Right cardiac atrium (tissue), 5 donors: ENCODE measurements at regions of chr1 and their contacts with region 1.

Region 1: GRCh38 chr1:235093696-235094592 is 34.7 kb downstream of the TOMM20 start:
- DNase-seq: peak; percentile 74 to 93 (median 89)
- ATAC-seq: peak; percentile 76 to 81
- H3K4me3 ChIP-seq: no peak overlapping the region
- H3K27ac ChIP-seq: no peak overlapping the region
- H3K4me1 ChIP-seq: no peaks in the 10 kb centered on the region
- H3K27me3 ChIP-seq: no peaks in the 10 kb centered on the region

Region 2: GRCh38 chr1:234599617-234600417 is 494.1 kb before region 1 on chr1:
- intact Hi-C with region 1: loop called in 1 of 4 experiments (anchors 10 kb)
- DNase-seq: peak; percentile 91 to 96 (median 96)
- ATAC-seq: peak; percentile 93 to 94
- H3K4me3 ChIP-seq: peak overlapping the region; percentile 44
- H3K27ac ChIP-seq: peak overlapping the region; percentile 97
- H3K4me1 ChIP-seq: no peaks in the 10 kb centered on the region
- H3K27me3 ChIP-seq: no peaks in the 10 kb centered on the region

Region 3: DNA sequence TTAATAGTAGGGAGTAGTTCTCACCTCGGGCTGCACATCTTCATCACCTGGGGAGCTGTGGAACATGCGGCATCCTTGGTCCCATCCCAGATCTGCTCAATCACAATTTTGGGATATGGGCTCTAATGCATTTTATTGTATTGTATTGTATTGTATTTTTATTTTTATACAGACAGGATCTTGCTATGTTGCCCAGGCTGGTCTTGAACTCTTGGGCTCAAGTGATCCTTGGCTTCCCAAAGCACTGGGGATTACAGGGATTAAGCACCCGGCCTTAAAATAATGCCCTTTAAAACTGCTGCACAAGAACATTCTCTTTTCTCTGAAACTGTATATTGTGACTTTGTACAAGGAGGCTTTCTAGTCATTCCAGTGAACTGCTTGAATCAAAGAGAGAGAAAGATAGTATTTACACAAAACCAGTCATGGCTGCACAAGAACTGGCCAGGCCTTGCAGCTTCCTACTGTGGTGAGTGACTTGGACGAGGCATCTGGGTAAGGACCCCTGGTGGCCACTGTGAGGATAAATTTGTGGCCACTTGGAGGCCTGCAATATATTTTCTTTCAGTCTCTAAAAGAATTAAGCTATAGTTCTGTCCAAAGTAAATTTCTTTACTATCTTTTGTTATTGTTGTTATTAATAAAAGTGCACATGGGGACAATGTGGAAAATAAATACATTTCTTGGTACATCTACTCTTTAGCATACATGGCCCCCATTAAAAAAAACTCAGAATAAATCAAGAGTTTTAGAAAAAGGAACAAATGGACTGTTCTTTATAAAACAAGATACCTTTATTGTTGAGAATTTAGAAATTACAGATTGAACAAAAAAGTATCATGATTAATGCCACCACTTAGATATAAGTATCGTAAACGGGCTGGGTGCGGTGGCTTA is 321.3 kb after region 1 on chr1:
- intact Hi-C with region 1: loop called in 1 of 4 experiments (anchors 10 kb)
- DNase-seq: peak; percentile 56 to 81 (median 69)
- ATAC-seq: peak; percentile 75 to 78
- H3K4me3 ChIP-seq: no peak overlapping the region
- H3K27ac ChIP-seq: no peak overlapping the region
- H3K4me1 ChIP-seq: no peaks in the 10 kb centered on the region
- H3K27me3 ChIP-seq: no peaks in the 10 kb centered on the region

Region 4: DNA sequence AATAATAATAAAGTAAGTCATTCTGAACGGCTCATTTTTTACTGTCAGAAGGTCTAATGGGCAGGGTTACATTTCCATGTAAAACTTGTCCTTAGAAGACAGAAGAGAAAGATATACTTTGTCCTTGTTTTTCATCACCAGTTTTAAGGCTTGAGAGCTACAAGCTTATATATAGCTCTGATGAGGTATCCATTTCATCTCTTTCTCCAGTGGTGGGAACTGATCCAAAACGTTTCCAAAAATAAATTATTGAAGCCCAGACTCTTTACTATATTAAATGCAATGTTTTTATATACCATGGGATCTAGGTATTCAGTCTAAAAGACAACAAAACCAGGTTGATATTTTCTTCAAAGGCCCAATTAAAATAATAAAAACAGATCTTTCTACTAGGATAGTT is 401.6 kb after region 1 on chr1:
- intact Hi-C with region 1: no loop called
- DNase-seq: no peak
- ATAC-seq: no peak
- H3K4me3 ChIP-seq: no peak overlapping the region
- H3K27ac ChIP-seq: no peak overlapping the region
- H3K4me1 ChIP-seq: no peaks in the 10 kb centered on the region
- H3K27me3 ChIP-seq: no peaks in the 10 kb centered on the region